Activated B cell treated with CpG ODN at 0.5 μM for 24 hours (primary cell): ENCODE measurements at regions of chr1 and their contacts with region 1.

Region 1: GRCh38 chr1:222792744-222793143 is 22.1 kb upstream of the DISP1 start:
- DNase-seq: no peak
- ATAC-seq: no peak
- H3K4me3 Mint-ChIP-seq: no peak overlapping the region
- H3K27ac Mint-ChIP-seq: peak overlapping the region; percentile 13
- H3K4me1 Mint-ChIP-seq: peaks cover 34% of the 10 kb centered on the region
- H3K27me3 Mint-ChIP-seq: no peaks in the 10 kb centered on the region
- CTCF ChIP-seq: peak; percentile 38

Region 2: DNA sequence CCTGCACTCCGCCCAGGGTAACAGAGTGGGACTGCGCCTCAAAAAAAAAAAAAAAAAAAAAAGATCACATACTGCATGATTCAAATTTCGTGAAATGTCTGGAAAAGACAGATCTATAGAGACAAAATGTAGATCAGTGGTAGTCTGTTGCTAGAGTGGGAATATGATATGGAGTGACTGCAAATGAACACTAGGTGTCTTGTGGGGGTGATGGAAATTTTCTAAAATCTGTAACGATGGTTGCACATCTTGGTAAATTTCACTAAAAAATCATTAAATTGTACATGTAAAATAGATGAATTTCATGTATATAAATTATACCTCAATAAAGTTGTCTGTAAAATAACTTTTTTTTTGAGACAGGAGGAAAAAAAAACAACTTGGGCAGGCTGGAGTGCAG is 85.9 kb before region 1 on chr1:
- CTCF ChIA-PET with region 1: no interaction called
- POLR2A ChIA-PET with region 1: no interaction called
- intact Hi-C with region 1: no loop called
- DNase-seq: no peak
- ATAC-seq: no peak
- H3K4me3 Mint-ChIP-seq: no peak overlapping the region
- H3K27ac Mint-ChIP-seq: peak overlapping the region; percentile 0
- H3K4me1 Mint-ChIP-seq: peaks cover 72% of the 10 kb centered on the region
- H3K27me3 Mint-ChIP-seq: no peaks in the 10 kb centered on the region
- CTCF ChIP-seq: no peak

Region 3: DNA sequence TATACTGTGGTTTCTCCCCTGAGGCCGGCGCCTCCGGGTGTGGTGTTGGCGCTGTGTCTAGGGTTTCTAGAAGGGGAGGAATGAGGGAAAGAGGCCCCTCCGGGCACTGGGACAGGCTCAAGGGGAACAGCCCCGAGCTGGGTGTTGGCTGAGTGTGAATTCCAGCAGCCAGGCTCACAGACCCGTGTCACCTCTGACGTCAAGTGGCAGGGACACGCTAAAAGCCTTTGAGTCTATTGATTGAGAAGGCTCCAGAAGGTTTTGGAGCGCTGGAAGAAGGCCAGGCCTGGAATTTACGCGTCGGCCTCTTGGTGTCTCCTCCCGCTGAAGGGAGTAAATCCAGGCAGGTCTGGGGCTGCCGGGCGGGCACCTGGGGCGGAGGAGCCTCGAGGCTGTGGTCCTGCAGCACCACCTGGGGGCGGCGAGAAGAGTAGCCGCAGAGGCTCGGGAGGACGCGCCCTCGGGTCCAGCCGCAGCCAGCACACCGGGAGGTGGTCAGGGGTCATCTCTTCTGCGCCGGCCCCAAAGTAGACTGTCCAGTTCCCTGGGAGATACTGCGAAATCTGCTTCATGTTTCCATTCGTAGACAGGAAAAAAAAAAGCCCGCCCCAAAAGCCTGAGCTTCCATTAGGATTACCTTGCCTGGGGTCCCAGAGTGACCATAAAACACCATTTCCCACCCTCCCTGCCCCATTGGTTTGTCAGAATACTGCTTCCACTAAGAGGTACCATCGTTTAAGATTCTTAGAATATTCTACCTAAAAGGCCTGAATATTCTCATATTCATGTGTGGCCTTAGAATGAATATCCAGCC is 288.6 kb after region 1 on chr1:
- CTCF ChIA-PET with region 1: interaction called, 25 read pairs
- POLR2A ChIA-PET with region 1: interaction called, 6 read pairs
- intact Hi-C with region 1: loop called (anchors 1 kb)
- DNase-seq: peak; percentile 71
- ATAC-seq: peak; percentile 99
- H3K4me3 Mint-ChIP-seq: peak overlapping the region; percentile 83
- H3K27ac Mint-ChIP-seq: peak overlapping the region; percentile 80
- H3K4me1 Mint-ChIP-seq: peaks cover 3% of the 10 kb centered on the region
- H3K27me3 Mint-ChIP-seq: peaks cover 5% of the 10 kb centered on the region
- CTCF ChIP-seq: peak; percentile 92

Region 4: DNA sequence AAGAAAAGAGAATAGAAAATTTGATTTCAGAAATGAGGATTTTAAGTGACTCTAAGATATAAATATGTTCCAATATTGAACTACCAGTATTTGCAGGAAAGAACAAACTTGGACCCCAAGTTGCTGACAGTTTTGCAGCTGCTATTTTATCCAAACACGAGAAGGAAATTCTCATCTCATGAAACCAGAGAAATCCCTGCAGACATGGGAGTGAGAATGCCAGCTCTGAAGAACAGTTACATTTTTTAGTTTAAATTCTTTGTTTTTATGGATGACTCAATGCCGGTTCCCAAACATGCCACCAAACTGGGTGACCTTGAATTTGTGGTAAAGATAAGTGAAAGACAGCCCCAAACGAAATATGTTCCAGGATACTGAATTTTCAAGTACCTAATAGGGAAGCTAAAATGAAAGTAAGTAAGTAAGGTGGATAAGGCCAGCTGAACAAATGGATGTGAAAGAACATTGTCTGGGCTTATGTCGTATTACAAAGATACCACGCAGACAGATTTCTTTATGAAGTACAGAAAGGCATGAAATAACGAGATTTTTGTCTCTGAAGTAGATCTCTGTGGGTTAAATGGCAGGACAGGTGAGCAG is 330.4 kb after region 1 on chr1:
- CTCF ChIA-PET with region 1: interaction called, 13 read pairs
- POLR2A ChIA-PET with region 1: no interaction called
- intact Hi-C with region 1: loop called (anchors 1 kb)
- DNase-seq: no peak
- ATAC-seq: no peak
- H3K4me3 Mint-ChIP-seq: peak overlapping the region; percentile 36
- H3K27ac Mint-ChIP-seq: no peak overlapping the region
- H3K4me1 Mint-ChIP-seq: peaks cover 8% of the 10 kb centered on the region
- H3K27me3 Mint-ChIP-seq: peaks cover 7% of the 10 kb centered on the region
- CTCF ChIP-seq: no peak

Region 5: GRCh38 chr1:223683586-223684487 is 891.1 kb after region 1 on chr1:
- CTCF ChIA-PET with region 1: interaction called, 3 read pairs
- POLR2A ChIA-PET with region 1: no interaction called
- intact Hi-C with region 1: loop called (anchors 5 kb)
- DNase-seq: peak; percentile 20
- ATAC-seq: peak; percentile 47
- H3K4me3 Mint-ChIP-seq: no peak overlapping the region
- H3K27ac Mint-ChIP-seq: no peak overlapping the region
- H3K4me1 Mint-ChIP-seq: no peaks in the 10 kb centered on the region
- H3K27me3 Mint-ChIP-seq: peaks cover 10% of the 10 kb centered on the region
- CTCF ChIP-seq: no peak